HEK293 (cell line): ENCODE measurements at regions of chr3 and their contacts with region 1.

Region 1: GRCh38 chr3:150925751-150926201 is 20.5 kb upstream of the MINDY4B start:
- H3K4me3 ChIP-seq: no peak overlapping the region
- H3K27ac ChIP-seq: no peak overlapping the region
- H3K4me1 ChIP-seq: no peaks in the 10 kb centered on the region
- CTCF ChIP-seq: peak; percentile 17; the same call in 1 of the 2 replicates

Region 2: DNA sequence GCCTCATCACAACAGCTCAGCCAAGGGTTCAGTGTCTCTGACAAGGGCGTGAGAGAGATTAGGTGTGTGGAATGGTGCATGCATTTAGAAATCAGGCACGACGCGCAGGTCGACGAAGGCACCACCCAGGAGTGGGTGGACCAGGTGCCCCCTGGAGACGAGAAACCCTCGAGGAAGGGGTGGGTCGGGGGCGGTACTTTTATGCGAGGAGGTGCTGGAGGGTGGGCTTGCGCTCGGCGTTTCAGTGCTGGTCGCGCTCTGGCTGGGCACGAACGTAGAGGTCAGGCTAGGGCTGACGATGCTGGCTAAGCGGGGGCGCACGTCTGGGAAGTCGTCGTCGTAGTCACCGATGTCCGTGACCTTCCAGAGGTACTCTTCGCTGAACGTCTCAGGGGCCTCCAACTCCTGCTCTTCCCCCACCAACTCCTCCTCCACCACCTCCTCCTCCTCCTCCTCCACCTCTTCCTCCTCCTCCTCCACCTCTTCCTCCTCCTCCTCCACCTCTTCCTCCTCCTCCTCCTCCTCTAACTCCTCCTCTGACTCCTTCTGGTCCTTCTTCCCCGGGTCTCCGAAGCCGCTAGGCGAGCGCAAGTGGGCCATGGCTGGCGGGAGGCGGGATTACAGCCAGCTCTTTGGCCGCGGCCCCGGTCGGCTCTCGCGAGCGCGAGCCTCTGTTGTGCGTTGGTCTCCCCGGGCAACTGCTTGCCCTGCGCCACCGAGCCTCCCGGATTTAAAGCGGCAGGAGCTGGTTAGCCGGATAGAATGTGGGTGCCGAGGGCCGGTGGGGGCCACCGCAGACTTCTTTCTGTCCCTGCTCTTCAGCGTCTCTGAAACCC is 222.3 kb before region 1 on chr3 and contains the start of gene ERICH6:
- CTCF ChIA-PET with region 1: no interaction called
- POLR2A ChIA-PET with region 1: no interaction called
- H3K4me3 ChIP-seq: peak within 1 kb of the TSS; percentile 62
- H3K27ac ChIP-seq: no peak within 1 kb of the TSS; the same call in 1 of the 2 replicates
- H3K4me1 ChIP-seq: no peaks in the 10 kb centered on the region
- CTCF ChIP-seq: no peak; the same call in 1 of the 2 replicates

Region 3: GRCh38 chr3:150913133-150913922 is 12.4 kb before region 1 on chr3:
- CTCF ChIA-PET with region 1: interaction called, 10 read pairs
- POLR2A ChIA-PET with region 1: no interaction called
- H3K4me3 ChIP-seq: no peak overlapping the region
- H3K27ac ChIP-seq: no peak overlapping the region
- H3K4me1 ChIP-seq: no peaks in the 10 kb centered on the region
- CTCF ChIP-seq: no peak

Region 4: GRCh38 chr3:150945226-150946032 is 19.7 kb after region 1 on chr3:
- CTCF ChIA-PET with region 1: no interaction called
- POLR2A ChIA-PET with region 1: no interaction called
- H3K4me3 ChIP-seq: no peak overlapping the region
- H3K27ac ChIP-seq: no peak overlapping the region
- H3K4me1 ChIP-seq: no peaks in the 10 kb centered on the region
- CTCF ChIP-seq: no peak